Dendritic cell treated with granulocyte-macrophage colony-stimulating factor and Interleukin-4, amounts not matched to agents 40 ng/mL and 50 ng/mL, for 4 days (primary cell): ENCODE measurements at regions of chr18 and their contacts with region 1.

Region 1: DNA sequence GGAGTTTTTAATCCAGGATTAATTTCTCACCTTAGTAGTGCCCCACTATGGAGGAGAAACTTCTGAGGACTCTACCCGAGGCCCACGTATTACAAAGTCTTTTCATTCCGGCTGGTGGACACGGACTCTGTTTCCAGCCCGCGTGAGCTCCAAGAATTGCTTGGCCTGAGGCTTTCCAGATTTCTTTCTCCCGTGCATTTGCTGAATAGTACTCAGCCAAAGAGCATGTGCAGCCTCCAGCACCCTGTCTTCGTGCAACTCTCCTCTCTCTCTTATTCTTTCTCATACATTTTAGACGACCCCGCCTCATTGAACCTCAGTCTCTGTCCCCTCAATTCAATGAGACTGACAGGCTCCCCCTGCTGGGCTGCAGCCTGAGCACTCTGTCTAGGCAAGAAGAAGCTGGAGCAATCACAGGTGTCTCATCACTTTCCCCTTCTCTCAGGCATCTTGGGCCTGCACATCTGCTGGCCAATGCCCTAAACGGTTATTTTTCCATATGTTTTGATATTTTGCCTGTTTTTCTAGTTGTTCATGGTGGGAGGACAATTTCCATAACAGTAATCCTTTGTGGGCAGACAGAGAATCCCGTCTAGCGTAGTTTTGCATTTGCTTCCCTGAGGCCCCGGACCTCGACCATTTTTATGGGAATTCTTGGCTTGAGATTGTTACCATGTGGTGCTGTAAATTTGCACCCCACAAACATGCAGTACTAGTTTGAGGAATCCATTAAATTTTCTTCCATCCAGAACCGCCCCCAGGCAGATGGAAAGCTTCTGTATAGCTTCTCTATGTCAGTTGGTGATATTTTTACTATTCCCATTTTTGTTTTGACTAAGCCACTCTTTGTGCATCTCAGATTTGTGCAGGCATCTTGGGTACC is 50.1 kb upstream of the LPIN2 start:
- H3K4me3 Mint-ChIP-seq: no peak overlapping the region
- H3K27ac Mint-ChIP-seq: no peak overlapping the region
- H3K4me1 Mint-ChIP-seq: peaks cover 21% of the 10 kb centered on the region
- H3K27me3 Mint-ChIP-seq: no peaks in the 10 kb centered on the region

Region 2: GRCh38 chr18:2932247-2933181 is 130.5 kb before region 1 on chr18:
- intact Hi-C with region 1: loop called (anchors 2 kb)
- H3K4me3 Mint-ChIP-seq: no peak overlapping the region
- H3K27ac Mint-ChIP-seq: no peak overlapping the region
- H3K4me1 Mint-ChIP-seq: peaks cover 6% of the 10 kb centered on the region
- H3K27me3 Mint-ChIP-seq: no peaks in the 10 kb centered on the region

Region 3: DNA sequence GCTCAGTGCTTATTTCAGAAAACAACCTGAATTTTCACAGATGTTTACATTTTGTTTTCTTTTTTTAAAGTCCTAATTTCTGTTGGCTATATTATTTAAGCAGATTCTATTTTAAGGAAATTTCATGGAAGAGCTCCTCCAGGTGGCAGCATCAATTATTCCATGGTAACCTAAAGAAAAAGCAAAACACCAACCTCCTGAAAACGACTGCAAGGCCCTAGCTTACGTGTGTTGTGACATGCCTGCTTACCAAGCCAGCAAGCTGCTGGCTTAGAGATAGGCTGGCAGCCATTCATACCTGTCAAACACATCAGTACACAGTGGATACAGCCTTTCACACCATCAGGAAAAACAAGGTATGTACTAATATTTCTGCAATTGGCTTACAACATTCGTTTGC is 115.0 kb before region 1 on chr18:
- intact Hi-C with region 1: loop called (anchors 5 kb)
- H3K4me3 Mint-ChIP-seq: no peak overlapping the region
- H3K27ac Mint-ChIP-seq: no peak overlapping the region
- H3K4me1 Mint-ChIP-seq: peaks cover 8% of the 10 kb centered on the region
- H3K27me3 Mint-ChIP-seq: no peaks in the 10 kb centered on the region

Region 4: GRCh38 chr18:2994603-2995432 is 68.2 kb before region 1 on chr18:
- intact Hi-C with region 1: loop called (anchors 2 kb)
- H3K4me3 Mint-ChIP-seq: no peak overlapping the region
- H3K27ac Mint-ChIP-seq: peak overlapping the region; percentile 4
- H3K4me1 Mint-ChIP-seq: peaks cover 54% of the 10 kb centered on the region
- H3K27me3 Mint-ChIP-seq: no peaks in the 10 kb centered on the region

Region 5: GRCh38 chr18:3012964-3013804 is 49.9 kb before region 1 on chr18 and contains the start of gene LPIN2:
- intact Hi-C with region 1: loop called (anchors 5 kb)
- H3K4me3 Mint-ChIP-seq: peak within 1 kb of the TSS; percentile 78
- H3K27ac Mint-ChIP-seq: peak within 1 kb of the TSS; percentile 83
- H3K4me1 Mint-ChIP-seq: peaks cover 74% of the 10 kb centered on the region
- H3K27me3 Mint-ChIP-seq: no peaks in the 10 kb centered on the region

Region 6: DNA sequence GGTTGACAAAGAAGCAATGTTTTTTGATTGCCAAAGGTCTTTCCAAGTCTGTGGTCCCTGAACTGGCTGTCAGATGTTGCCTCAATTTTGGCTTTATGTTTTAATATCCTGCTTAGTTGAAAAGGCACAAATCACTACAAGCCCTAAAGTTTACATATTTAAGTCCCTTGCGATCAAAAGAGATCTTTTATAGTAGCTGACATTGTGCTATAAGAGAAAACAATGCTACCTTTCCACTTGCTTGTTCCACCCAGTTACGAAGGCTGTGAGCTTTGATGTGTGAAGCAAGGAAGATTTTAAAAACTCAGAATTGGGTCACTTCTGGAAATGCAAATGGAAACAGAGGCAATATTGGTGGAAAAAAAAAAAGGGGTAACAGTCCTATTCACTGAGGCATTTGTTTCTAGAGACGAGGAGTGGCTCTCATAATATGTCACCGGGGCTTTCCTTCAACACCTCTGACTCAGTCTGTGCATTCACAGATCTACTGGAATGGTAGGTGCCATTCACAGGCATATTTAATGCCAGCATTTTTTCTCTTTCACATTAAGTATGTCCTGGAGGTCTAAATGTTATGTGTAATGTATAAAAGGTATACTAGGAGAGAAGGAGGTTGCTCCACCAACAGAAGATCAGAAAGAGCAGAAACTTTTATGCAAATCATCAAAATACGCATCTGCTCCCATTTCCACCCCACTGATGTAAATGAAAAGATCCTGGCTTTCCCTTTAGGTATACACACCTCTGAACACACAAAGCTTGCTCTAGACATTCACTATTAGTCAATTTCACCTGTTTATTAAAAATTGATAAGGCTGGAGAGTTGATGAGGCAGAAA is 478.7 kb after region 1 on chr18:
- intact Hi-C with region 1: no loop called
- H3K4me3 Mint-ChIP-seq: no peak overlapping the region
- H3K27ac Mint-ChIP-seq: no peak overlapping the region
- H3K4me1 Mint-ChIP-seq: peaks cover 5% of the 10 kb centered on the region
- H3K27me3 Mint-ChIP-seq: no peaks in the 10 kb centered on the region